HCT116 (cell line): ENCODE measurements at regions of chr5 and their contacts with region 1.

Region 1: DNA sequence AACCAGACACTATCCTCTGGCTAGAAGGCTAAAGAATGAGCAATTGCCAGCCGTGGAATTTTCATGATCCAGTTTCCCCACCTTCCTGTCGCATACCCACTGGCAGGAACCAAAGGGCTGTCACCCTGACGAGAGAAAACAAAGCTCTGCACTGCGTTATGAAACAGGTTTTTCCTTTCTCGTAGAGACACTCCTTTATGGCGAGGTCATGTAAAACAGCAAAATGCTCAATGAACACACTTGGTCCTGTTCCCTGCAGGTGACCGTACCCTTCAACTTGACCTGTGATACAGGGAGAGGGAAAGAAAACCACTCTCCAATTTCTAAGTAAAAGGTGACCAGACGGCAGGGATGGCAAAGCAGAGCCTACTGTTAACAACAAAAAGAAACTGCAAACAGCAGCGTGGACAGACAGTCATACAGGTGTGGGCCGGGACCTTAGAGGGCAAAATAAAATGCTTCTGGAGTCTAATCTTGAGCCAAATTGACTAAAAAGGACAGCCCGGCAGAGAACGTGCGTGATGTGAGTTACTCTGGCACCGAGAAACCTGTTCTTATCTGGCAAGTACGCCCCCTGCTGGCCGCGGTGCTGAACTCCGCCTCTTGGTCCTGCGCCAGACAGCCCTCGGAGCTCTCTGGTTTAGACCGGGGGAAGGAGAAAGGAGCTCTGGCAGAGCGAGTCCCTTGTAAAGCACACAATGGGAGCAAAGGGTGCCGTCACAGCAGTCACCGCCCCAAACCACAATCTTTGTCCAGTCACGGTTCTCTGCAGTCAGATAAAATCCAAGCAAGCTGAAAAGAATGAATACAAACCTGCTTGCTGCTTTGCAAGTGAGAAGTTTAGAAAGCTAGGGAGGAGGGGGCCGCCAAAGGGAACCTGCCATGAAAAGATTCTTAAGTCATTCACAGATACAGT is 98.9 kb downstream of the EFNA5 start:
- DNase-seq: peak; percentile 83
- ATAC-seq: peak; percentile 95
- H3K4me3 ChIP-seq: peak overlapping the region; percentile 41 to 53
- H3K27ac ChIP-seq: no peak overlapping the region
- H3K4me1 ChIP-seq: peaks cover 0 to 17% of the 10 kb centered on the region in 2 experiments; a peak in 2 of 4 replicates
- H3K27me3 ChIP-seq: no peaks in the 10 kb centered on the region
- CTCF ChIP-seq: peak; percentile 48 to 93 (median 89); a peak in 5 of 6 replicates
- POLR2A ChIP-seq: no peak
- RAD21 ChIP-seq: peak; percentile 72

Region 2: GRCh38 chr5:106399391-106399790 is 1172.5 kb before region 1 on chr5:
- CTCF ChIA-PET with region 1: no interaction called
- POLR2A ChIA-PET with region 1: no interaction called
- RAD21 ChIA-PET with region 1: no interaction called
- intact Hi-C with region 1: no loop called
- DNase-seq: no peak
- ATAC-seq: no peak
- H3K4me3 ChIP-seq: no peak overlapping the region
- H3K27ac ChIP-seq: no peak overlapping the region
- H3K4me1 ChIP-seq: peaks cover 0 to 27% of the 10 kb centered on the region in 2 experiments; a peak in 2 of 4 replicates
- H3K27me3 ChIP-seq: no peaks in the 10 kb centered on the region
- CTCF ChIP-seq: no peak
- POLR2A ChIP-seq: no peak
- RAD21 ChIP-seq: no peak

Region 3: DNA sequence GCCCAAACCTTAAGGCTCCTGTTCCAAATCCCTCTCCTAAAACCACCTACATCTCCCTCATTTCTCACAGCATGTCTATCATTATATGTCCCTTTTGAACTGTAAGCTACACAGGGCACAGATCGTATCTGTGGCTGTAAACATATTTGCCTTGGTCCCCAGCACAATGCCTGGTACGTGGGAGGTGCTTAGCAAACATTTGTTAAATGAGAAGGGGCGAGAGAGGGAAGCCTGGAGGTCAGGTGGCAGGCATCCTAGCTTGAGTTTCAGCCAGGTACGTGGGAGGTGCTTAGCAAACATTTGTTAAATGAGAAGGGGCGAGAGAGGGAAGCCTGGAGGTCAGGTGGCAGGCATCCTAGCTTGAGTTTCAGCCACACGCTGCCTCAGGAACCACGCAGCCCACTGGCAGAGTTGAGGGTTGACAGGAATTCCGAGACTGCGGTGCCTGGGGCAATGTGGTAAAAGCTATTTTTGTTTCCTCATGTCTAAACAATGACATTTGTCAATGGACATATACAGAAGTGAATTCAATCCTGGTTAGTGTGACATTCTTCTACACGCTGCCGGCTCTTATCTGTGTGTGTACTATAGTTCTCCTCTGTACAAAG is 14.7 kb before region 1 on chr5:
- CTCF ChIA-PET with region 1: interaction called, 17 read pairs
- POLR2A ChIA-PET with region 1: interaction called, 3 read pairs
- RAD21 ChIA-PET with region 1: no interaction called
- intact Hi-C with region 1: no loop called
- DNase-seq: peak; percentile 59
- ATAC-seq: peak; percentile 84
- H3K4me3 ChIP-seq: peak overlapping the region in 1 of 2 experiments; percentile 24; a peak in 2 of 4 replicates
- H3K27ac ChIP-seq: no peak overlapping the region
- H3K4me1 ChIP-seq: peaks cover 6 to 15% of the 10 kb centered on the region in 2 experiments; a peak in 3 of 4 replicates
- H3K27me3 ChIP-seq: no peaks in the 10 kb centered on the region
- CTCF ChIP-seq: no peak
- POLR2A ChIP-seq: no peak
- RAD21 ChIP-seq: 0 out of 2 replicates have a peak, but pooled peaks have one; percentile 13

Region 4: GRCh38 chr5:107594253-107595045 is 22.6 kb after region 1 on chr5:
- CTCF ChIA-PET with region 1: interaction called, 17 read pairs
- POLR2A ChIA-PET with region 1: no interaction called
- RAD21 ChIA-PET with region 1: no interaction called
- intact Hi-C with region 1: no loop called
- DNase-seq: no peak
- ATAC-seq: no peak
- H3K4me3 ChIP-seq: no peak overlapping the region
- H3K27ac ChIP-seq: no peak overlapping the region
- H3K4me1 ChIP-seq: no peaks in the 10 kb centered on the region
- H3K27me3 ChIP-seq: no peaks in the 10 kb centered on the region
- CTCF ChIP-seq: no peak
- POLR2A ChIP-seq: no peak
- RAD21 ChIP-seq: no peak

Region 5: GRCh38 chr5:107646418-107646817 is 74.5 kb after region 1 on chr5:
- CTCF ChIA-PET with region 1: no interaction called
- POLR2A ChIA-PET with region 1: no interaction called
- RAD21 ChIA-PET with region 1: no interaction called
- intact Hi-C with region 1: no loop called
- DNase-seq: no peak
- ATAC-seq: no peak
- H3K4me3 ChIP-seq: no peak overlapping the region
- H3K27ac ChIP-seq: no peak overlapping the region
- H3K4me1 ChIP-seq: no peaks in the 10 kb centered on the region
- H3K27me3 ChIP-seq: no peaks in the 10 kb centered on the region
- CTCF ChIP-seq: no peak
- POLR2A ChIP-seq: no peak
- RAD21 ChIP-seq: no peak